Activated CD8-positive, alpha-beta T cell treated with anti-CD3 and anti-CD28 coated beads, Interleukin-2, amount 10 ng/mL, durations not matched to agents 7 days and 5 days (primary cell): ENCODE measurements at regions of chr1 and their contacts with region 1.

Region 1: GRCh38 chr1:151909150-151910149 is at the start of gene THEM4:
- DNase-seq: peak; percentile 96
- ATAC-seq: peak; percentile 94
- H3K4me3 Mint-ChIP-seq: peak within 1 kb of the TSS; percentile 94
- H3K27ac Mint-ChIP-seq: peak within 1 kb of the TSS; percentile 87
- H3K4me1 Mint-ChIP-seq: peaks cover 45% of the 10 kb centered on the region
- H3K27me3 Mint-ChIP-seq: peaks cover 2% of the 10 kb centered on the region
- total RNA-seq, gene THEM4: 29.8 to 31.7 TPM

Region 2: DNA sequence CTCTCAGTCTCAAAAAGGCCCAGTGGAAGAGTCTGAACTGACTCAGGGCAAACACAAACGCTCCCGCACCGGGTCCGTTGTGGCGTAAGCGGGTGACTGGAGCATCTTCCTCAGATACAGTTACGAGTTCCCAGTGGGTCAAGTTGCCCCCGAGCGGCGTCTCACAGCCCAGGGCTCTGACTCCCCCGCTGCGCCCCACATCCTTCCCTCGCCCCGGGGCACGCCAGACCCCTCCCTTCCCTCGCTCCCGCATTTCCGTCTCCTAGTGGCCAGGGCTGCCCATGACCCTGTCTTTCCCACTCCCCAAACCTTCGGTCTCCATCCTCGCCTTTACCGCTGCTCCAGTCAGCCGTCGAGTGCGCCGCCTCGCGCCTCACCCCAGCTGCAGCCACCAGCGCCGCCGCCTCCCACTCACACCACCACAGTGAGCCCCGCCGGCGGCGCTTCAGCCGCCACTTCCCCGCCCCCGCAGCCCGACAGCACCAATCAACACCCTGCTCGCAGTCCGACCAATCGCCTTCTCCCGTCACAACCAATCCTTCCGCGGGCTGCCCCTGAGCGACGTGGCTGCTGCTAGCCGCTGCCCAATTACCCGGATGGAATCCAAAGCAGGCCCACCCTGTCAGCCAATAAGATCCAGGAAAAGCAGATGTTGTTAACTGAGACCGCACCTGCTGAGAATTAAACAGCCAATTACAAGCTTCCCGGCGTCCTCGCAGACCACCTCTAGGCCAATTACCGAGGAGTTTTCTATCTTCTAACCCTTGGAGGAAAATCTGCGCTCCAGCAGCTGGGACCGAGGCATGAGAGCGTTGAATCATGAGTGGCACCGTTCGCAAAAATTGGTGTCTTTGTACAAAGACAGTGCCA is 119.1 kb before region 1 on chr1 and contains the start of gene TDRKH:
- CTCF ChIA-PET with region 1: no interaction called
- POLR2A ChIA-PET with region 1: no interaction called
- DNase-seq: peak; percentile 99
- ATAC-seq: peak; percentile 98
- H3K4me3 Mint-ChIP-seq: peak within 1 kb of the TSS; percentile 94
- H3K27ac Mint-ChIP-seq: peak within 1 kb of the TSS; percentile 89
- H3K4me1 Mint-ChIP-seq: peaks cover 27% of the 10 kb centered on the region
- H3K27me3 Mint-ChIP-seq: no peaks in the 10 kb centered on the region
- total RNA-seq, gene TDRKH: 14.6 to 16.4 TPM

Region 3: GRCh38 chr1:151898513-151898991 is 10.9 kb before region 1 on chr1:
- CTCF ChIA-PET with region 1: interaction called, 43 read pairs
- POLR2A ChIA-PET with region 1: interaction called, 30 read pairs
- DNase-seq: peak; percentile 70
- ATAC-seq: peak; percentile 88
- H3K4me3 Mint-ChIP-seq: peak overlapping the region; percentile 62
- H3K27ac Mint-ChIP-seq: peak overlapping the region; percentile 90
- H3K4me1 Mint-ChIP-seq: peaks cover 58% of the 10 kb centered on the region
- H3K27me3 Mint-ChIP-seq: no peaks in the 10 kb centered on the region